Left cardiac atrium (tissue), 4 donors: ENCODE measurements at regions of chr16 and their contacts with region 1.

Region 1: GRCh38 chr16:70460737-70461261 is 6.4 kb downstream of the FCSK start:
- DNase-seq: peak; percentile 62
- ATAC-seq: peak; percentile 93 to 96

Region 2: GRCh38 chr16:70395345-70395901 is 65.4 kb before region 1 on chr16:
- intact Hi-C with region 1: loop called (anchors 10 kb)
- DNase-seq: peak; percentile 65
- ATAC-seq: peak; percentile 56 to 64

Region 3: GRCh38 chr16:70561623-70562022 is 100.8 kb after region 1 on chr16:
- intact Hi-C with region 1: no loop called
- DNase-seq: no peak
- ATAC-seq: peak in 1 of 2 donors; percentile 34